AG04450 (cell line): ENCODE measurements at regions of chr1 and their contacts with region 1.

Region 1: DNA sequence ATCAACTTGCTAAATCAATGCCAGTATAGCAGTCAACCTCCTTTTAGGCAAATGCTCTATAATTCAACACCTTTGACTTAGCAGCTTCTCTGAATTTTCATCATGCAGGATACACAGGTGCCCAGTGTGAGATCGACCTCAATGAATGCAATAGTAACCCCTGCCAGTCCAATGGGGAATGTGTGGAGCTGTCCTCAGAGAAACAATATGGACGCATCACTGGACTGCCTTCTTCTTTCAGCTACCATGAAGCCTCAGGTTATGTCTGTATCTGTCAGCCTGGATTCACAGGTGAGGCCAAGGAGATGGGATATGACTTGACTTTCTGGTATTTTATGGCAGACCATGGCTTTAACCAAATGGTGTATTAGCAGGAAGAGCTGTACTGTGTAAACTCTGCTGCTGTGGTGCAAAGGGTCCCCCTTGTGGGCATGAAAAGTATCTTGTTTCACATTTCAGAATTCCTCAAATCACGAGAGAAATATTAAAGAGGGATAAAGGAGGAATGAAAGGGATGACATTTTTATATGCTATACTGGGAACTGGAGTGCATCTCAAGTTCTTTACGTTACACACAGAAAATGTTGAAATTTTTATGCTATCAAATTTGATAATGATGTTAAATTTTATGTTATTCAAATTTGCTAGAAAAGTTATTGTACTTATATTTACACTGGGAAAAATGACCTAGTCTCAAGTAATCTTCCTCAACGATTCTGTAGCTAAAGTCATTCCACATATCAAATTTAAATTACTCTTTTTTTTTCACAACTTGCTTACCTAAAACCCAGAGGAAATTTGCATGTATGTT is 88.9 kb downstream of the CRB1 start:
- DNase-seq: no peak
- H3K4me3 ChIP-seq: no peak overlapping the region
- H3K27ac ChIP-seq: no peak overlapping the region
- H3K27me3 ChIP-seq: no peaks in the 10 kb centered on the region
- CTCF ChIP-seq: peak; percentile 73

Region 2: DNA sequence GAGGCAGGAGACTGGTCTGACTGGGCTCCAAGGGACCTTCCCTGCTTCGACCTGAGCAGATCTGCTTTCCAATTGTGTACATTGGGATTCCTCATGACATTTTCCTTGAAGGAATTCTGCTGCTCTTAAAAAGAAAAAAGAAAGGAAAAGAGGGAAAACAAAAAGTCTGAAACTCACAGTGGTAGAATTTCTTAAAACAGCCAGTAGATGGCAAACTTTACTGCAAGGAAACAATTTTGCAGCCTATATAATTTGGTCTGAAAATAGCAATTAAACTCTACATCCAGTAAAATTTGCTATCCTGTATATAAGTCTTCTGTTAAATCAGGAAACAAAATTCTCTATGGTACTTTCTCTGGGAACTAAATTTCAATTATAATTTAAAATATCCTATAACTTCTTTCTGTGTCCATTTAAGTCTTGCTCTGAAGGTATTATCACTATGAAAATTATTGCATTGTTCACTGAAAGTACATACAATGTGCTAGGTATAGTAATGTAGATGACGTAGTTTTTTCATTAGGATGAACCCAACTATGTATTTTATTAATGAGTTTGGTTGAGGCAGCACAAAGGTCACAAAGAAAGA is 29.1 kb before region 1 on chr1:
- CTCF ChIA-PET with region 1: interaction called, 21 read pairs
- POLR2A ChIA-PET with region 1: no interaction called
- DNase-seq: no peak
- H3K4me3 ChIP-seq: no peak overlapping the region
- H3K27ac ChIP-seq: no peak overlapping the region
- H3K27me3 ChIP-seq: no peaks in the 10 kb centered on the region
- CTCF ChIP-seq: peak; percentile 72